Heart right ventricle (tissue), 16 donors: ENCODE measurements at regions of chr6 and their contacts with region 1.

Region 1: GRCh38 chr6:56292505-56293181 is 45.3 kb upstream of the COL21A1 start:
- DNase-seq: peak in 1 of 2 donors; percentile 44
- ATAC-seq: peak in 7 of 8 donors; percentile 74 to 91 (median 88)
- H3K4me3 ChIP-seq: no peak overlapping the region
- H3K27ac ChIP-seq: no peak overlapping the region
- H3K4me1 ChIP-seq: peaks cover 0 to 15% (median 0%) of the 10 kb centered on the region in 9 donors
- H3K27me3 ChIP-seq: no peaks in the 10 kb centered on the region
- CTCF ChIP-seq: peak; percentile 18 to 78 (median 66)

Region 2: GRCh38 chr6:55276745-55277530 is 1015.7 kb before region 1 on chr6:
- intact Hi-C with region 1: loop called in 4 of 10 experiments (anchors 2 to 10 kb)
- DNase-seq: peak; percentile 39 to 45
- ATAC-seq: peak in 7 of 8 donors; percentile 48 to 82 (median 79)
- H3K4me3 ChIP-seq: peak overlapping the region in 7 of 10 donors; percentile 3 to 33 (median 23)
- H3K27ac ChIP-seq: peak overlapping the region in 7 of 10 donors; percentile 4 to 62 (median 54)
- H3K4me1 ChIP-seq: peaks cover 0 to 12% (median 0%) of the 10 kb centered on the region in 9 donors
- H3K27me3 ChIP-seq: no peaks in the 10 kb centered on the region
- CTCF ChIP-seq: peak; percentile 15 to 71 (median 58)

Region 3: DNA sequence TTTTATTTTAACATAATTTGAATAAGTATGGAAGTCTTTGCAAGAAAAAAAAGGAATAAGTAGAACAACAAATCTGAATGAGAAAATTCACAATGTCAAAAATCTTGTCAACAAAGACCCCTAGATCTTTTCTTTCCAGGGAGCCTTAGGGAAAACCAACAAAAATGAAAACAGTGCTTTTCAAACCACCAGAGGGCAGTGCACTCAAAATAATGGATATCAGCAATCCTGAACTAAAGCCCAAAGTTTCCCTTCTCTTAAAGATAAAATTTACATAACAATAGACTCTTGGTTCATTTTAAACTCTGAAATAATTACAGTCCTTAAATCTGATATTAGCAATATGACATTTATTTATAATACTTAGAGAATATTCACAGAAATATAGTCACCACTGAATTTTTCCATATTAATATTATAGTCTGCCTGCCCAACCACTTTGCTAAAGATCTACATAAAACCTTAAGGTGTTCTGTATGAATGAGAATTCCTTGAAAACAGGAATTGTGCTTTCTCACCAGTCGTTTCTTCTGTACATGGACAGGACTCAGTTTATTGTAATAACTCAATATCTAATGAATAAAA is 311.9 kb before region 1 on chr6:
- intact Hi-C with region 1: loop called (anchors 1 to 5 kb)
- DNase-seq: peak in 1 of 2 donors; percentile 17
- ATAC-seq: peak in 1 of 8 donors; percentile 47
- H3K4me3 ChIP-seq: no peak overlapping the region
- H3K27ac ChIP-seq: no peak overlapping the region
- H3K4me1 ChIP-seq: no peaks in the 10 kb centered on the region
- H3K27me3 ChIP-seq: no peaks in the 10 kb centered on the region
- CTCF ChIP-seq: peak; percentile 47 to 83 (median 73)

Region 4: DNA sequence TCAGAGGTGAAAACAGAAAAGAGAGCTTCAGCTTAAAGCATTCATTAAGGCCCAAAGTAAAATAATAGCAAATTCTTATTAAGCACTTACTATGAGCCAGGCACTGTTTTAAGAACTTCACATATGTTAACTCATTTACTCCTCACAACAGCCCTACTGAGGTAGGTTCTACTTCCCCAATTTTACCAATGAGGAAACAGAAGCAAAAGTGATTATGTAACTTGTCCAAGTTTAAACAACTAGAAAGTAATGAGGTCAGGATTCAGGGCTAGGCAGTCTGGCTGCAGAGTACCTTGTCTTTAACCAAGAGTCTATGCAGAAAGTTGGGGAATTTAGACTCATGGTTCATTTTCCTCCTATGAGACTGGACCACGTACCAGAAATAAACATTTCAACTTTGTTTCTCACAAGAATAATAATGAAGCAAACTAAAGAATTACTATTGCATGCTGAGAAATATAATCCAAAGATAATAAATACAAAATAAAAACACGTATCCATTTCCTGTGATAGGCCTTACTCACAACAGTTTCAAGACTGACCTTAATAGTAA is 49.0 kb before region 1 on chr6:
- intact Hi-C with region 1: no loop called
- DNase-seq: no peak
- ATAC-seq: peak in 1 of 8 donors; percentile 45
- H3K4me3 ChIP-seq: no peak overlapping the region
- H3K27ac ChIP-seq: peak overlapping the region in 2 of 10 donors; percentile 12 to 16
- H3K4me1 ChIP-seq: peaks cover 0 to 45% (median 10%) of the 10 kb centered on the region in 9 donors
- H3K27me3 ChIP-seq: peaks cover 0 to 17% (median 0%) of the 10 kb centered on the region in 7 donors
- CTCF ChIP-seq: no peak